MCF 10A (cell line): ENCODE measurements at regions of chr1 and their contacts with region 1.

Region 1: GRCh38 chr1:235971571-235972310 is 93.1 kb downstream of the NID1 start:
- DNase-seq: peak; percentile 98
- H3K4me3 Mint-ChIP-seq: no peak overlapping the region
- H3K27ac Mint-ChIP-seq: peak overlapping the region; percentile 9
- H3K4me1 Mint-ChIP-seq: peaks cover 17% of the 10 kb centered on the region
- H3K27me3 Mint-ChIP-seq: no peaks in the 10 kb centered on the region
- CTCF ChIP-seq: peak; percentile 99

Region 2: DNA sequence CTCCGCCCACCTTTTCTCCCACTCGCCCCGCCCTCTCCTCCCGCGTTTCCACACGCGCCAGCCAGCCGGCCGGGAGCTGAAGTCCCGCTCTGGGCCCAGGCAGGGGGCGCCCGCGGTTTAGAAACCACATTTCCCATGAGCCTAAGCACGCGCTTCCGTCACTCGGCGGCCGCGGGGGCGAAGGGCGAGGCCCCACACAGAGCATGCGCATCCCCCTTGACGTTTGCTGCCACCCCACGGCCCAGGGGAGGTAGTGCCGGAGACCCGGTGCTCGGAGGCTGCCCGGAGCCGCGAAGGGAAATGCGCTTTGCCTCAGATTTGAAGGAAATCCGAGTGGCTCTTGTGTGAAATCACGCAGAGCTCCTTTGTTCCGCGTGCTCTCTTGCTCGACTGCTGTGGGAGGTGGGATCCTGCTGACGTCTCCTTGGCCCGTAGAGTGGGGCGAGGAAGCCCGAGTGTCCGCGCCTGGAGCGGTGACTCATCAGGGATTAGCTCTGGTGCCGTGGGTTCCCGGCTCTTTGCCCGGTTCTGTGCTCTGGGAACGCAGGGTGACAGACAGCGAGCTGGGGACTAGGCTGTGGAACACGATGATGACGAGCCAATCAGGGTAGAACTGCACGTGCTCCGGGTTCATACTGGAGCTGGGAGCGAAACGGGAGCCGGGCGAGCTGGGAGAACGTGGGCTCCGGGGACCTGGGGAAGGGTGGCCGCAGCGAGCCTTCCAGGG is 467.1 kb before region 1 on chr1:
- CTCF ChIA-PET with region 1: interaction called, 13 read pairs
- POLR2A ChIA-PET with region 1: interaction called, 13 read pairs
- intact Hi-C with region 1: loop called (anchors 2 kb)
- DNase-seq: peak; percentile 100
- H3K4me3 Mint-ChIP-seq: peak overlapping the region; percentile 97
- H3K27ac Mint-ChIP-seq: peak overlapping the region; percentile 98
- H3K4me1 Mint-ChIP-seq: peaks cover 31% of the 10 kb centered on the region
- H3K27me3 Mint-ChIP-seq: no peaks in the 10 kb centered on the region
- CTCF ChIP-seq: peak; percentile 99

Region 3: DNA sequence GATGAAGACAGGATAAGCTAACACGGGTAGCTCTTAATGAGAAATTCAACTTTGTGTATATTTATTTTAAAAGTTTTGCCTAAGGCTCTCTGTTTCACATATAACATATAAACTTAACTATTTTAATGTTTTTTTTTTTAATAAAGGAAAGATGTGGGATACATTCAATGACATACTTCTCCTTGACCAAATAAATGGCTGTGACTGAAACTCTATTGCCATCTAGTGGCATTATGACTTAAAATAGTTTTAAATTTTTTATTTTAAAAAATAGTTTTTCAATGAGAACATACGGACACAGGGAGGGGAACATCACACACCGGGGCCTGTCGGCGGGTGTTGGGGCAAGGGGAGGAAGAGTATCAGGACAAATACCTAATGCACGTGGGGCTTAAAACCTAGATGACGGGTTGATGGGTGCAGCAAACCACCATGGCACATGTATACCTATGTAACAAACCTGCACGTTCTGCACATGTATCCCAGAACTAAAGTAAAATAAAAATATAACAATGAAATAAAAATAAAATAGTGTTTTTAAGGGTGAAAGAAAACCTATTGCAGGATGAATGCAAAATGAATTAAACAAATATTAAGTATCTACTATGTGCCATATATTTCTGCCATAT is 188.5 kb before region 1 on chr1:
- CTCF ChIA-PET with region 1: interaction called, 80 read pairs
- POLR2A ChIA-PET with region 1: interaction called, 8 read pairs
- intact Hi-C with region 1: loop called (anchors 1 kb)
- DNase-seq: peak; percentile 73
- H3K4me3 Mint-ChIP-seq: no peak overlapping the region
- H3K27ac Mint-ChIP-seq: no peak overlapping the region
- H3K4me1 Mint-ChIP-seq: peaks cover 10% of the 10 kb centered on the region
- H3K27me3 Mint-ChIP-seq: no peaks in the 10 kb centered on the region
- CTCF ChIP-seq: peak; percentile 72

Region 4: DNA sequence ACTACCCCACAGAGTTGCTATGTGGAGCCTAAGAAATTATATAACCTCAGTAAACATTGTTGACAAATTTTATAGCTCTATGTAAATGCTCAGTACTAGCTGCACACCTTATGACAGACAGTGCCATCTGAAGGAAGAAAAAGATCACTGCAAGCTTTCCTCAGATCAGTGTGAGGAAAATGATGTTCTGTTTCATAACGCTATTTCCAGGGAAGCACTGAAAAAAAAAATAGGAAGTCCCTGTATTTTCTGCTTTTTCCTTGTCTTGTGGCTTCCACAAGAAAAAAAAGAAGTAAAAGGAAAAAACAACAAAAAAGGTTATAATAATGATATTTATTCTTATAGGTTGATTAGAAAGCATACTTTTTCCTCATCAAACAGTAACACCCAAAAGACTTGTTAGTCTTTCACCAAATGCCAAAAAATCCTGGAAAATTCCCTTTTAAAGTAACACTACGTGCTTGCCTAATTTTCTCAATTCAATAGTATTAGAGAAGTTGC is 128.2 kb before region 1 on chr1:
- CTCF ChIA-PET with region 1: interaction called, 92 read pairs
- POLR2A ChIA-PET with region 1: interaction called, 4 read pairs
- intact Hi-C with region 1: no loop called
- DNase-seq: peak; percentile 76
- H3K4me3 Mint-ChIP-seq: no peak overlapping the region
- H3K27ac Mint-ChIP-seq: no peak overlapping the region
- H3K4me1 Mint-ChIP-seq: no peaks in the 10 kb centered on the region
- H3K27me3 Mint-ChIP-seq: no peaks in the 10 kb centered on the region
- CTCF ChIP-seq: peak; percentile 76

Region 5: GRCh38 chr1:235917267-235917811 is 54.4 kb before region 1 on chr1:
- CTCF ChIA-PET with region 1: interaction called, 34 read pairs
- POLR2A ChIA-PET with region 1: interaction called, 17 read pairs
- intact Hi-C with region 1: no loop called
- DNase-seq: peak; percentile 100
- H3K4me3 Mint-ChIP-seq: peak overlapping the region; percentile 35
- H3K27ac Mint-ChIP-seq: peak overlapping the region; percentile 81
- H3K4me1 Mint-ChIP-seq: peaks cover 55% of the 10 kb centered on the region
- H3K27me3 Mint-ChIP-seq: no peaks in the 10 kb centered on the region
- CTCF ChIP-seq: no peak

Region 6: GRCh38 chr1:235960809-235961208 is 10.9 kb before region 1 on chr1:
- CTCF ChIA-PET with region 1: interaction called, 179 read pairs
- POLR2A ChIA-PET with region 1: interaction called, 20 read pairs
- intact Hi-C with region 1: no loop called
- DNase-seq: peak; percentile 61
- H3K4me3 Mint-ChIP-seq: no peak overlapping the region
- H3K27ac Mint-ChIP-seq: peak overlapping the region; percentile 17
- H3K4me1 Mint-ChIP-seq: peaks cover 11% of the 10 kb centered on the region
- H3K27me3 Mint-ChIP-seq: no peaks in the 10 kb centered on the region
- CTCF ChIP-seq: no peak

Region 7: GRCh38 chr1:236018885-236019453 is 47.2 kb after region 1 on chr1:
- CTCF ChIA-PET with region 1: interaction called, 14 read pairs
- POLR2A ChIA-PET with region 1: interaction called, 9 read pairs
- intact Hi-C with region 1: no loop called
- DNase-seq: no peak
- H3K4me3 Mint-ChIP-seq: no peak overlapping the region
- H3K27ac Mint-ChIP-seq: no peak overlapping the region
- H3K4me1 Mint-ChIP-seq: peaks cover 18% of the 10 kb centered on the region
- H3K27me3 Mint-ChIP-seq: no peaks in the 10 kb centered on the region
- CTCF ChIP-seq: no peak